ENCODE measurements at regions of chr20 and their contacts with region 1.

Region 1: DNA sequence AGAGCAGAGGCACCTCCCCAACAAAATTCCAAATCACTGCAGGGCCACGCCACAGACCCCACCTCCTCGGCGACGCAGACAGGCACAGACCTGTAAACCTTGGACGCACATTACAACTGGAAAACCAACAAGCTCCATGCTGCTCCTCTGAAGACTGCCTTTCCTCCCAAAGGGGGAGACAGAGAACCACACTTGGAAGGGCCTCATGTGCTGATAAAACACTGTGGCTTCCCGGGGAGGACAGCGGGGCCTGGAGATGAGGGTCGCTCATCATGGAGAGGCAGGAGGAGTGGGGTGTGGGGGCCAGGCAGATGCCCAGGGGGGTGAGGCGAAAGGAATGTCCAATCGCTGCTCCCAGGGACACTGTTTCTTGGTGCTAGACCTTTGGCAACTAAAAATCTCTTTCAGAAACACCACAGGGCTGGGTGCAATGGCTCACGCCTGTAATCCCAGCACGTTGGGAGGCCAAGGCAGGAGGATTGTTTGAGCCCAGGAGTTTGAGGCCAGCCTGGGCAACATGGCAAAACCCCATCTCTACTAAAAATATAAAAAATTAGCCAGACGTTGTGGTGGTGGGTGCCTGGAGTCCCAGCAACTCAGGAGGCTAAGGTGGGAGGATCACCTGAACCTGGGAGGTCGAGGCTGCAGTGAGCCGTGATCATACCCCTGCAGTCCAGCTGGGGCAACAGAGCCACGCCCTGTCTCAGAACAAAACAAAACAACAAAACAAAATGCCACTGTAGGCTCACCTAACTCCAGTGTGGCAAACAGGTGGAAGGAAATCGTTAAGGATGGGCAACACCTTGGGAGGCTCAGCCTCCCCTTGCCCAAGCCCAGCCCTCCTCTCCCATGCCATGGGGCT is 53.8 kb downstream of the ABHD12 start:
- DNase-seq: peak; percentile 82
- ATAC-seq: peak; percentile 81
- H3K4me3 ChIP-seq: no peak overlapping the region
- H3K27ac ChIP-seq: no peak overlapping the region
- H3K4me1 ChIP-seq: peaks cover 45% of the 10 kb centered on the region
- H3K27me3 ChIP-seq: no peaks in the 10 kb centered on the region
- CTCF ChIP-seq: peak; percentile 96
- EP300 ChIP-seq: no peak
- POLR2A ChIP-seq: no peak
- RAD21 ChIP-seq: peak; percentile 91

Region 2: GRCh38 chr20:25378884-25379733 is 42.3 kb after region 1 on chr20:
- CTCF ChIA-PET with region 1: no interaction called
- POLR2A ChIA-PET with region 1: interaction called, 25 read pairs
- in situ Hi-C with region 1: no loop called
- intact Hi-C with region 1: loop called (anchors 2 kb)
- DNase-seq: no peak
- ATAC-seq: peak; percentile 24
- H3K4me3 ChIP-seq: peak overlapping the region in 1 of 3 experiments; percentile 15; a peak in 1 of 6 replicates
- H3K27ac ChIP-seq: peak overlapping the region; percentile 10
- H3K4me1 ChIP-seq: peaks cover 66% of the 10 kb centered on the region
- H3K27me3 ChIP-seq: no peaks in the 10 kb centered on the region; a peak in 1 of 5 replicates
- CTCF ChIP-seq: no peak
- EP300 ChIP-seq: no peak
- POLR2A ChIP-seq: no peak
- RAD21 ChIP-seq: no peak

Region 3: DNA sequence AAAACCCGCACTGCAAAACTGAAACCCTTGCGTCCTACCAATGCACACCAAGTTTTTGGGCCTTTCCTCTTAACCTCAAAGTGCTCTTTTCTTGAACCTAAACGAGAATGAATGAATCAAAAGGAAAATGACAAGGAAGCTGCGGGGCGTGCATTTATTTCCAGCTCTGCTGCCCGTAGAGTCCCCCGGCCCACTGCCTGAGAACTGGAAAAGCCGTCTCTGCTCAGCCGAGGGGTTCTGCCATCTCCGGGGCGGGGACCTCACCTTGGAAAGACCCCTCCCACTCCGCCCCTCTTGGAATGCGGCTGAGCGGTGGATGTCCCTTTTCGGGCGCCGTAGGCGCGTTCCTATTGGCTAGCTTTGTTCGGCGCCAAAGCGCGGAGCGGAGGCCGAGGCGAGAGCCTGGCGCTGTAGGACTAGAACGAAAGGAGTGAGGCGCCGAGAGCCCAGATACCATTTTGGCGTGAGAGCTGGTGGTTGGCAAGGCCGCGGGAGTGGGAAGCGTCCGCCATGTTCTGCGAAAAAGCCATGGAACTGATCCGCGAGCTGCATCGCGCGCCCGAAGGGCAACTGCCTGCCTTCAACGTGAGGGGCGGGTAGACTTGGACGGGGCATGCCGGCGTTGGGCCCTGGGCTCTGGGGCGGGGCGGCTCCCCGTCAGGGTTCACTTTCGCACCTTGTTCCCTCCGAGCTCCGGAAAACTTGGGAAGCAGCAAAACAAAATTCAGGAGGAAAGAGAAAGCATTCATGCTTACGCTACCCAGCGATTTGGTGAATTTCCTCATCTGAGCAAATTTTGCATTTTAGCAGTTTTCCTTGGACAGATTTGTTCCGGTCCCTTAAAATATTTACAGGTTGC is 70.7 kb after region 1 on chr20 and contains the start of gene GINS1:
- CTCF ChIA-PET with region 1: no interaction called
- POLR2A ChIA-PET with region 1: interaction called, 8 read pairs
- in situ Hi-C with region 1: no loop called
- intact Hi-C with region 1: loop called (anchors 2 kb)
- DNase-seq: peak; percentile 95
- ATAC-seq: peak; percentile 93
- H3K4me3 ChIP-seq: peak within 1 kb of the TSS; percentile 78 to 89 (median 88)
- H3K27ac ChIP-seq: peak within 1 kb of the TSS; percentile 86
- H3K4me1 ChIP-seq: peaks cover 24% of the 10 kb centered on the region
- H3K27me3 ChIP-seq: no peaks in the 10 kb centered on the region; a peak in 1 of 5 replicates
- CTCF ChIP-seq: peak; percentile 42; the same call in 1 of the 2 replicates
- EP300 ChIP-seq: peak; percentile 37 to 65
- POLR2A ChIP-seq: peak; percentile 94 to 99
- RAD21 ChIP-seq: peak; percentile 48; the same call in 1 of the 2 replicates
- total RNA-seq, gene GINS1: 59.9 and 74.6 TPM in 2 replicates

Measured in HepG2 (cell line).